Left cardiac atrium (tissue), 4 donors: ENCODE measurements at regions of chr6 and their contacts with region 1.

Region 1: GRCh38 chr6:135423649-135424128 is 73.9 kb downstream of the AHI1 start:
- DNase-seq: no peak
- ATAC-seq: peak; percentile 41 to 57

Region 2: GRCh38 chr6:135145063-135145800 is 278.5 kb before region 1 on chr6:
- intact Hi-C with region 1: loop called (anchors 5 to 10 kb)
- DNase-seq: no peak
- ATAC-seq: no peak

Region 3: GRCh38 chr6:135346747-135347146 is 76.9 kb before region 1 on chr6:
- intact Hi-C with region 1: no loop called
- DNase-seq: no peak
- ATAC-seq: no peak